SK-N-SH (cell line): ENCODE measurements at regions of chr1 and their contacts with region 1.

Region 1: DNA sequence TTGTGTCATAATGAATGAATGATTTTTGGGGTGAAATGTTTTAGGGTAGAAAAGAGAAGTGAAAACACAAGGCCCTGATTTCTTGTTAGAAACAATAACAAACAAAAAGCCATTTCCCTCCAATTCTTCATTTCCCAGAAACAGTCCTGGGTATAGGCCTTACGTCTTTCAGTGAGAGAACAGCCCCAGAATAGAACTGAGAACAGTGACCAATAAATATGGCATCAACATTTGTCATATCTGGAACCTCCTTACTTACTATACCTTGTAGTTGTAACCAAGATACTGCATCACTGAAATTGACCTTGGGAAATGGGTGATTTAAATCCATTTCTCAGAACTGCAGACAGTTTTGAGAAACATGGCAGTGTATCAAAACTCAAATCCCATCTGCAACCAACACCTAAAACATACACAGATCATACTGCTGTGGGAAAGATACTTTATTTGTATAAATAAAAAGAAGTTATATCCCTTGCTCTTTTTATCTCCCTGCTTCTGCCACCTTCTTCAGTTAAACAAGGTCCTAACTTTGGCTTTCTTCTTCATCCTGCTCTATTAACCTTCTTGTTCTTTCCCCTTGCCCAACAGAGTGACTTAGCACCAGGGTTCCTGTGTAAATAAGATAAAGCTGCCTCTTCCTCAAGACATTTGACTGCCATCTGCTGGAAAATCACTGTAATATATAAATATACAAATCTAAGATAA is 19.5 kb downstream of the XKR8 start:
- DNase-seq: no peak
- H3K4me3 ChIP-seq: no peak overlapping the region
- H3K27ac ChIP-seq: no peak overlapping the region
- H3K4me1 ChIP-seq: no peaks in the 10 kb centered on the region; a peak in 1 of 4 replicates
- H3K27me3 ChIP-seq: no peaks in the 10 kb centered on the region
- CTCF ChIP-seq: peak; percentile 69
- EP300 ChIP-seq: no peak
- RAD21 ChIP-seq: peak; percentile 68

Region 2: GRCh38 chr1:27383039-27383605 is 596.2 kb before region 1 on chr1 and contains the start of gene CD164L2:
- CTCF ChIA-PET with region 1: no interaction called
- POLR2A ChIA-PET with region 1: no interaction called
- DNase-seq: peak; percentile 70
- H3K4me3 ChIP-seq: no peak within 1 kb of the TSS
- H3K27ac ChIP-seq: no peak within 1 kb of the TSS
- H3K4me1 ChIP-seq: peaks cover 0 to 10% of the 10 kb centered on the region in 2 experiments; a peak in 1 of 4 replicates
- H3K27me3 ChIP-seq: no peaks in the 10 kb centered on the region
- CTCF ChIP-seq: no peak
- EP300 ChIP-seq: no peak
- RAD21 ChIP-seq: no peak
- polyA plus RNA-seq, gene CD164L2: 0.05 TPM in 2 replicates

Region 3: GRCh38 chr1:27891196-27891889 is 88.0 kb before region 1 on chr1:
- CTCF ChIA-PET with region 1: no interaction called
- POLR2A ChIA-PET with region 1: no interaction called
- DNase-seq: no peak
- H3K4me3 ChIP-seq: no peak overlapping the region
- H3K27ac ChIP-seq: no peak overlapping the region
- H3K4me1 ChIP-seq: no peaks in the 10 kb centered on the region
- H3K27me3 ChIP-seq: no peaks in the 10 kb centered on the region
- CTCF ChIP-seq: no peak
- EP300 ChIP-seq: no peak
- RAD21 ChIP-seq: no peak

Region 4: GRCh38 chr1:27992276-27992675 is 13.0 kb after region 1 on chr1:
- CTCF ChIA-PET with region 1: interaction called, 10 read pairs
- POLR2A ChIA-PET with region 1: no interaction called
- DNase-seq: no peak
- H3K4me3 ChIP-seq: no peak overlapping the region
- H3K27ac ChIP-seq: no peak overlapping the region
- H3K4me1 ChIP-seq: no peaks in the 10 kb centered on the region
- H3K27me3 ChIP-seq: no peaks in the 10 kb centered on the region
- CTCF ChIP-seq: no peak
- EP300 ChIP-seq: no peak
- RAD21 ChIP-seq: no peak

Region 5: GRCh38 chr1:28099050-28099769 is 119.9 kb after region 1 on chr1:
- CTCF ChIA-PET with region 1: no interaction called
- POLR2A ChIA-PET with region 1: no interaction called
- DNase-seq: no peak
- H3K4me3 ChIP-seq: no peak overlapping the region
- H3K27ac ChIP-seq: no peak overlapping the region
- H3K4me1 ChIP-seq: no peaks in the 10 kb centered on the region
- H3K27me3 ChIP-seq: no peaks in the 10 kb centered on the region
- CTCF ChIP-seq: no peak
- EP300 ChIP-seq: no peak
- RAD21 ChIP-seq: no peak